AG04449 (cell line): ENCODE measurements at regions of chr4 and their contacts with region 1.

Region 1: DNA sequence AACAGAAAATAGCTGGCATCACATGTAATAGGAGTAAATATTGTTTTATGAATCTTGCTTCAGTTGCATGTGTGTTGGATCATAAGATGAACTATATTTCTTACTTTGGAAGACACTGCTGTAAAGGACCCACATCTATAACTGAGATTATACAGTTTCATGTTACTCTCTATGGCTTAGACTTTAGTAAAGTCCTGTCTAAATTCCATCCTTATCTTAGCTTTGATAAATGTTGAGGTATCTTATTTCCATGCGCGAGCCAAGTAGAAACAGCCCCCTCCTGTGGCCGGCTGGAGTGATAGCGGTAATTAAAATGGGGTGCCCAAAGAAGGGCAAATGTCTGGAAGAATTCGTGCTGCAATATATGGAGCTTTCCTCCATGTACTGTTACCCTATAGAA is 43.0 kb downstream of the CCDC158 start:
- DNase-seq: no peak
- H3K4me3 ChIP-seq: no peak overlapping the region
- CTCF ChIP-seq: peak; percentile 29

Region 2: GRCh38 chr4:76305971-76306881 is 71.7 kb before region 1 on chr4 and contains the start of gene STBD1:
- CTCF ChIA-PET with region 1: interaction called, 20 read pairs
- POLR2A ChIA-PET with region 1: no interaction called
- DNase-seq: no peak
- H3K4me3 ChIP-seq: peak within 1 kb of the TSS; percentile 79
- CTCF ChIP-seq: no peak

Region 3: GRCh38 chr4:76388160-76388908 is 10.4 kb after region 1 on chr4:
- CTCF ChIA-PET with region 1: interaction called, 13 read pairs
- POLR2A ChIA-PET with region 1: no interaction called
- DNase-seq: no peak
- H3K4me3 ChIP-seq: no peak overlapping the region
- CTCF ChIP-seq: no peak

Region 4: GRCh38 chr4:76949276-76950051 is 571.6 kb after region 1 on chr4 and contains the start of gene SEPTIN11:
- CTCF ChIA-PET with region 1: no interaction called
- POLR2A ChIA-PET with region 1: no interaction called
- DNase-seq: peak; percentile 63
- H3K4me3 ChIP-seq: peak within 1 kb of the TSS; percentile 91
- CTCF ChIP-seq: no peak